Activated CD4-positive, alpha-beta memory T cell treated with anti-CD3 and anti-CD28 coated beads for 36 hours (primary cell): ENCODE measurements at regions of chr18 and their contacts with region 1.

Region 1: GRCh38 chr18:35050028-35050546 is 8.9 kb downstream of the MAPRE2 start:
- DNase-seq: no peak
- H3K4me3 Mint-ChIP-seq: no peak overlapping the region
- H3K27ac Mint-ChIP-seq: no peak overlapping the region
- H3K4me1 Mint-ChIP-seq: peaks cover 66% of the 10 kb centered on the region
- H3K27me3 Mint-ChIP-seq: no peaks in the 10 kb centered on the region

Region 2: DNA sequence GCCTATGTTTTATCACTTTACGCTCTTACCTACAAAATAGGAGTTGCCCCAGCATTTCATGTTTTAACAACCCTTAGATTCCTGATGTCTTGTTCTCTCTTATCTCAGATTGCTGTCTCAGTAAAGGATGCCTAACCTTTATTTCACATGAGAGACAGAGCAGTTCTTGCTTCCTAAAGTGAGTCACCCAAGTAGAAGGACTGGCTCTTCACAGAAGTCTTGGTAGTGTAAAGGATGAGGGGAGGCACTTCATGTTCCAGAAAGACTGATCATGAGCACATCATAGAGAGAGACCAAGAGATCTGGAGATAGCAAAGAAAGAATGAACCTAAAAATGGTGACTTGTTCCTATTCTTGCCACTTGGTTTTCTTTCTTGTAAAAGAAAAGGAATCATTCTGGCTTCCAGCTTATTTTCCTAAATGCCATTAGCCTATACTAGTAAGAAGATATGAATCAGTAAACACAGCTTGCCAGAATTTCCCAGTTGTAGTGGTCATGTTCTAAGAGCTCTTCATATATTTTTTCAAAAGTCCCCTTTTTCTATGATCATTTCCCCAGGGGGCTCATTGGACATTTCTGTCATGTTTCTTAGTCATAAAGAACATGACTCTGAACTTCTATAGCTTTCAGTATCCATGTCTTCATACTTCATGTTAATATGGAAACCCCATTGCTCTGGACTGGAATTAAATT is 46.0 kb after region 1 on chr18:
- CTCF ChIA-PET with region 1: no interaction called
- POLR2A ChIA-PET with region 1: interaction called, 3 read pairs
- intact Hi-C with region 1: loop called (anchors 2 kb)
- DNase-seq: no peak
- H3K4me3 Mint-ChIP-seq: no peak overlapping the region
- H3K27ac Mint-ChIP-seq: peak overlapping the region; percentile 19
- H3K4me1 Mint-ChIP-seq: peaks cover 22% of the 10 kb centered on the region
- H3K27me3 Mint-ChIP-seq: no peaks in the 10 kb centered on the region